Lower leg skin (tissue), 4 donors: ENCODE measurements at regions of chr9 and their contacts with region 1.

Region 1: DNA sequence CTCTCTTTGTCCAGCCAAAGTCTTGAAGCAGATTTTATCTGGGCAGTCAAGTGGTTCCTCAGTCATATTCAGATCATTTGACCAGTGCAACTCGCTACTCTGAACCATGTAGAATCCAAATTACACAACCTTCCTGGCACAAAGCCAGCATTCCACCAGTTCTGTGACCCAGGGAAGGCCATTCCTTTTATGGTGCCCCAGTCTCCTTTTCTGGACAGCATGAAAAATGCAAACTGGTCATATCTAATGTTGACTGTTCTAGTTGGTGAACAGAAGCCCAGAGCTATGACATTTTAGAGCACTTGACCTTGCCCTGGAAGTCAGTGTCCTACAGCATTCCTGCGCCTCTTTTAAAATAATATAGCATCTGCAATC is 364.6 kb downstream of the BRINP1 start:
- DNase-seq: peak in 1 of 2 donors; percentile 77
- H3K4me3 ChIP-seq: no peak overlapping the region
- CTCF ChIP-seq: no peak
- POLR2A ChIP-seq: no peak

Region 2: DNA sequence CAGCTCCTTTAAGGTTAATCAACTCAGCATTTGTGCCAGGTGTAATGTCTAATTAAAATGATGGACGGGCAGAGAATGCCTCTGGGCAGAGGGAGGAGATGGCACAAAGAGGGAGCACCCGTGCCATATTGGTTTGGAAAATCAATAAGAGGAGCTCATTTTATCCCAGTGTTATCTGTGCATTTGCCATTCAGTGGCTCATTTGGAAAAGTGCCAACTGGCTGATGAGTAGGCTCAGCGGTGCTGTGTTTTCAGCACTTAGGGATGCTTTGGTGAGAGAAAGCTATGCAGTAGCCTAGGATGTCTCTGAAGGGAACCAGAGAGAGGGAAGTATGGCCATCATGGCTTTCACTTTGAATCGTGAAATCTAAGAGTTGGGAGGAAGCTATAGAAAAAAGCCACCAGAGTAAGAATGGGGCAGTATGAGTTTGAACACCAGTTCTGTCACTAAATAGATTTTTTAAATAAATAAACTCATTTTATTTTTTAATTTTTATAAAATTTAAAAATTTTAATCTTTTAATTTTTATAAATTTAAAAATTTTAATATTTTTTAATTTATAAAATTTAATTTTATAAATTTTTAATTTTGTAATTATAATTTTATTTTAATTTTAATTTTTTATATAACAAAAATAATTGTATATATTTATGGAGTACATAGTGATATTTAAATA is 108.1 kb before region 1 on chr9:
- intact Hi-C with region 1: no loop called
- DNase-seq: no peak
- H3K4me3 ChIP-seq: no peak overlapping the region
- CTCF ChIP-seq: no peak
- POLR2A ChIP-seq: no peak

Region 3: GRCh38 chr9:118929287-118929686 is 75.3 kb before region 1 on chr9:
- intact Hi-C with region 1: no loop called
- DNase-seq: no peak
- H3K4me3 ChIP-seq: no peak overlapping the region
- CTCF ChIP-seq: no peak
- POLR2A ChIP-seq: no peak

Region 4: GRCh38 chr9:120104771-120105170 is 1100.2 kb after region 1 on chr9:
- intact Hi-C with region 1: loop called (anchors 5 kb)
- DNase-seq: no peak
- H3K4me3 ChIP-seq: no peak overlapping the region
- CTCF ChIP-seq: no peak
- POLR2A ChIP-seq: no peak